Aorta (tissue), 5 donors: ENCODE measurements at regions of chr5 and their contacts with region 1.

Region 1: GRCh38 chr5:73454351-73455036 is 5.9 kb upstream of the FOXD1 start:
- DNase-seq: no peak
- ATAC-seq: no peak
- H3K4me3 ChIP-seq: no peak overlapping the region
- H3K27ac ChIP-seq: no peak overlapping the region
- H3K4me1 ChIP-seq: no peaks in the 10 kb centered on the region
- H3K27me3 ChIP-seq: no peaks in the 10 kb centered on the region

Region 2: DNA sequence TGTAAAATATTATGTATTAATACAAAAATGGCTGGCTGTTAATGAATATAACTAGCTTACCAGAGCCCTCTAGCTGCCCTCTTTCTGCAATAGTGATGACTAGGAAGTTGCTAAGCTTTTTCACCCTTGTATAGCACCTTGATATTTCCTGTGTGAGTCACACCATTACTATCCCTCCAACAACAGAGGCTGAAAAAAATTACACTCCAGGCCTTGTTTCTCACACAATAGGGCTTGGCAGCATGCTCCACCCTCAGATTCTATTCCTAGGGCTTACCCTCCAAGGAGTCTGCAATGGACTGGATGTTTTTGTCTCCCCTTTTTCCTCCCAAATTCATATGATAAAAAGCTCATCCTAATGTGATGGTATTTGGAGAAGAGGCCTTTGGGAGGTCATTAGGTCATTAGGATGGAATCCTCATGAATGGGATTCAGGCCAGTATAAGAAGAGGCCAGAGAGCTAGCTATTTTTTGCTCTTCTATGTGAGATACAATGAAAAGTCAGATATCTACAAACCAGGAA is 1531.8 kb before region 1 on chr5:
- intact Hi-C with region 1: no loop called
- DNase-seq: no peak
- ATAC-seq: no peak
- H3K4me3 ChIP-seq: no peak overlapping the region
- H3K27ac ChIP-seq: no peak overlapping the region
- H3K4me1 ChIP-seq: peaks cover 0 to 10% of the 10 kb centered on the region in 2 donors
- H3K27me3 ChIP-seq: no peaks in the 10 kb centered on the region

Region 3: DNA sequence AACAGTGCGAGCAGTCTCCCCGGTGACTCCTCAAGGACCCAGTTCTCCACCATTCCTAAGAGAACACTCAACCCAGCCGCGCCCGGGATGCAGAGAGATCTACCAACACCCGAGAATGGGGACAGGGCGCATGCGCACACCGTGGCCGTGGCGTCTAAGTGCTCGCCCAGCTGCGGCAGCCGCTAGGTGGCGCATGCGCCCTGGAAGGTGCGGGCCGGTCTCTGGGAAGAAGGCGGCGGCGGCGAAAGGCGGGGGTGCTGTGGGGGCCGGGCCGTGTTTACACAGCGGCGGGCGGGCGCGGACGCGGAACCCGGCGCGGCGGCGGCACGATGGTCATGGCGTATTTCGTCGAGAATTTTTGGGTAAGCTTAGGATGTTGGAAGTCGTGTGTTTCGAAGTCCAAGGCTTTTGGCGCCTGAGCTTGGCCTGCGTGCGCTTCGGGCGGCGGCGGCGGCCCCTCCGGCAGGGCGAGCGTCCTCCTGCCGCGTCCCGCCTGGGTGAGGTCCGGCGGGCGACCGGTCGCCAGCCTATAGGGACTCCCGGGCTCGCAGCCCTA is 498.6 kb before region 1 on chr5 and contains the start of gene FCHO2:
- intact Hi-C with region 1: loop called in 1 of 2 experiments (anchors 5 kb)
- DNase-seq: peak; percentile 100
- ATAC-seq: peak; percentile 98
- H3K4me3 ChIP-seq: peak within 1 kb of the TSS; percentile 44 to 69
- H3K27ac ChIP-seq: peak within 1 kb of the TSS; percentile 74 to 81
- H3K4me1 ChIP-seq: peaks cover 0 to 4% of the 10 kb centered on the region in 2 donors
- H3K27me3 ChIP-seq: no peaks in the 10 kb centered on the region
- total RNA-seq, gene FCHO2: 47.7 to 57.5 TPM

Region 4: DNA sequence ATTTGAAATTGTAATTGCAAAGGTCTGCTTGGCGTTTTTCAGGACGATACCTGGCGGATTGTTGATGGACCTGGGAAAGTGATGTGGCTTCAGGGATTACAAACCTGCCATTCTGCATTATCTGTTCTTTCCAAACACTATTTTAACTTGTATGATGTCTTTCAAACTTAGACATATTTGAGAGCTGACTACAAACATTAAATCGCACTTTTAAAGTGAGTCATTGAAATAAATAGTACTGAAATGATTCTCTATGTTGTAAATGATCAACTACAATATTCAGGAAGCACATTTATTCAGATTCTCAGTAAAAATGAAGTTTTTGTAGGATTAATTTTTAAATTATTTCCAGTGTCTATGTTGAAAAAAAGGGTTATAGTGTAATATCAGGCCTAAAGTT is 366.5 kb before region 1 on chr5:
- intact Hi-C with region 1: loop called (anchors 2 to 5 kb)
- DNase-seq: no peak
- ATAC-seq: no peak
- H3K4me3 ChIP-seq: no peak overlapping the region
- H3K27ac ChIP-seq: no peak overlapping the region
- H3K4me1 ChIP-seq: no peaks in the 10 kb centered on the region
- H3K27me3 ChIP-seq: no peaks in the 10 kb centered on the region

Region 5: DNA sequence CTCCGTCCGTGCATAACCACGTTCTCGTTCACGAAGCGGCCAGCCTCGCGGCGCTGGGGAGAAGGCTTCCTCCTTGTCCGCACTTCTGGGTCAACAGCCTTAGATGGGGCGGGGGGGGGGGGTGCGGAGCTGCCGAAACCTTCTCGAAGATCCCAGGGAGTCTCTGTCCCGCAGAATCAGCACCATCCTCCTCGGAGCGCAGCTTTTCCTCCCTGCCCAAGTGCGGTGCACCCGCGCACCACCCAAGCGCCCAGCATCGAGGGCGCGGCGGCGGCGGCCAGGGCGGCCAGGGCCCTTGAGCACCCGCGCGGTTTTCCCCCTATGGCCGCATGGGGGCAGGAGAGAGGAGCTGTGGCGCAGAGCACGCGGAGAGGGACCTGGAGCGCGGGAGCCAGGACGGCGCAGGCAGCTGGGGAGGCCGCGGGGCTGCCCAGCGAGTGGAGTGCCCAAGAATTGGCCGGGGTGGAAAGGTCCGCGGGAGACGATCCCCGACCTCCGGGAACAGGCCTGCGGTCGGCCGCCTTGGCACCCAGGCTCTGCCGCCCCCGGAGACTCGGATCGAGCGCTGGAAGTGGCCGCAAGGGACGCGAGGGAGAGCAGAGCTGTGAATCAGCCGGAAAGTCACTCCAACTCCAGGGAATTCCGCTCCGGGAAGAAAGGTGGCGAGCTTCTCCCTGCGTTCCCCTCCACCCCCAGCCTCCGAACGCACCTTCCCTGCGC is 238.4 kb before region 1 on chr5:
- intact Hi-C with region 1: loop called (anchors 2 to 5 kb)
- DNase-seq: peak; percentile 84 to 95
- ATAC-seq: peak; percentile 99
- H3K4me3 ChIP-seq: peak overlapping the region in 1 of 2 donors; percentile 4
- H3K27ac ChIP-seq: no peak overlapping the region
- H3K4me1 ChIP-seq: no peaks in the 10 kb centered on the region
- H3K27me3 ChIP-seq: peaks cover 0 to 1% of the 10 kb centered on the region in 2 donors